ENCODE measurements at regions of chr12 and their contacts with region 1.

Region 1: GRCh38 chr12:58877242-58877743 is 43.0 kb downstream of the LRIG3 start:
- DNase-seq: peak; percentile 99
- ATAC-seq: peak; percentile 99
- H3K4me3 ChIP-seq: no peak overlapping the region
- H3K27ac ChIP-seq: peak overlapping the region; percentile 32
- H3K4me1 ChIP-seq: peaks cover 17% of the 10 kb centered on the region
- H3K27me3 ChIP-seq: no peaks in the 10 kb centered on the region
- CTCF ChIP-seq: no peak

Region 2: DNA sequence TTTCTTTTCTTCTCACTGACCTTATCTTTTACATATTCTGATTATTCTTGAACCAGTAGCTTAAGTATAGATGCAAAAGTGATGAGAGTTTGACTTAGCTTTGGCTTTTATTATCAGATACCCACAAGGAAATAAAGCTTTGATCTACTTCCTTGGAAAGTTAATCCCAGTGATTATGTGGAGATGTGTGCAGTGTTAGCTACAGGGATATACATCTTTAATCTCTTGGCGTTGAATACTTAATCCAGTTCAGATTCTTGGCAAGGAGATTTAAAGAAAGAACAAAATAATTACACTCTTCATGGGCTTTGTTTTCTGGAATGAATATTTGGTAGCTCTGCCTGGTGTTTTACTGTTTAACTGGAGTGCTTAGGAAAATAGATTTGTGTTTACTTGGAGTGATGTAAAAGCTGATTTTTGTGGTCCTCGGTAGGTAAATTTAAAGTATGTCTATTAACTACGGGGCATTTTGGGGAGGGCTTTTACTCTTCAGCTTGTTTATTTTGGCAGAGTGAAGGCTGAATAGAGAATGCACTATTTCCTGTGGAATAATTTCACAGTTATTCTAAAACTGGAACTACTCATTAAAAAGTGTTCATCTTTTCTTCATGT is 193.1 kb after region 1 on chr12:
- CTCF ChIA-PET with region 1: no interaction called
- POLR2A ChIA-PET with region 1: no interaction called
- intact Hi-C with region 1: loop called (anchors 5 kb)
- DNase-seq: peak; percentile 29
- ATAC-seq: peak; percentile 73
- H3K4me3 ChIP-seq: no peak overlapping the region
- H3K27ac ChIP-seq: no peak overlapping the region
- H3K4me1 ChIP-seq: peaks cover 10% of the 10 kb centered on the region
- H3K27me3 ChIP-seq: no peaks in the 10 kb centered on the region
- CTCF ChIP-seq: no peak

Region 3: DNA sequence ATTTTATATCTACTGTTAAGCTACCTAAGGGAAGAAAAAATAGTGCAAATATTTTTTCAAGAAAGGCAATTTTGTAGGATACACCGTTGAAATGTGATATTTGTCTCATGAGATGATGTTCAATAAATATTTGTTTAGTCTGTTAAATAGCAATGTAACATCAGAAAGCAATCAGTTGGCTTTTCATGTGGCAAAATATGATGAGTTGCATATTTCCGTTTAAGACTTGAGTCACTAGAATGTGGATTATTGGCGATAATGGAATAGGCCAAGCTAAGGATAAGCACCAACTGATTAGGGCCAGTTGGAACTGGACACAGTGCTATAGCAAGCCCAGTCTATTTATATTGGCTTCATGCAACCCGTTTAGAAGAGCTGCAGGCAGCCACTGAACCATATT is 468.1 kb after region 1 on chr12:
- CTCF ChIA-PET with region 1: interaction called, 12 read pairs
- POLR2A ChIA-PET with region 1: no interaction called
- intact Hi-C with region 1: no loop called
- DNase-seq: no peak
- ATAC-seq: no peak
- H3K4me3 ChIP-seq: no peak overlapping the region
- H3K27ac ChIP-seq: no peak overlapping the region
- H3K4me1 ChIP-seq: no peaks in the 10 kb centered on the region
- H3K27me3 ChIP-seq: no peaks in the 10 kb centered on the region
- CTCF ChIP-seq: no peak

Measured in PC-3 (cell line).